ENCODE measurements at regions of chr10 and their contacts with region 1.

Region 1: DNA sequence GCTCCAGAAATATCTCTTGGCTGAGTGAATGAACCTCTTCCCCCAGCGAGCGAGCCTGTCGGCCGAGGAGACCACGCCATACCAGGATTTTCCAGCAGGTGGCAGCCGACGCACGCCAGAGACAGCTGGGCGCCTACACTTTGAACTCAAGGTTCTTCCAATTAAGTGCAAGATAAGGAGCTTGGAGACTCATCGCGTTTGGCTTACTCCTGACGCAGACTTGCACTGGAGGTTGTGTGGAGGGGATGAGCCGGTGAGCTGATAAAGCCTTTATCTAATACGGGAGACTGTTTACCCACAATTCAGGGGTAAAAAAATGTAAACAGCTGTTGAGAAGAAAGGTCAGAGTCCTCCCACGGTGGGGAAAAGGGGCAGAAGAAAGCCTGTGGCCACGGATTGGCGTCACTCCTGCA is 45.9 kb upstream of the EMX2 start:
- DNase-seq: peak; percentile 76
- CTCF ChIP-seq: peak; percentile 98

Region 2: GRCh38 chr10:117241541-117242462 is 254.8 kb before region 1 on chr10:
- CTCF ChIA-PET with region 1: no interaction called
- POLR2A ChIA-PET with region 1: no interaction called
- DNase-seq: no peak
- CTCF ChIP-seq: no peak

Region 3: DNA sequence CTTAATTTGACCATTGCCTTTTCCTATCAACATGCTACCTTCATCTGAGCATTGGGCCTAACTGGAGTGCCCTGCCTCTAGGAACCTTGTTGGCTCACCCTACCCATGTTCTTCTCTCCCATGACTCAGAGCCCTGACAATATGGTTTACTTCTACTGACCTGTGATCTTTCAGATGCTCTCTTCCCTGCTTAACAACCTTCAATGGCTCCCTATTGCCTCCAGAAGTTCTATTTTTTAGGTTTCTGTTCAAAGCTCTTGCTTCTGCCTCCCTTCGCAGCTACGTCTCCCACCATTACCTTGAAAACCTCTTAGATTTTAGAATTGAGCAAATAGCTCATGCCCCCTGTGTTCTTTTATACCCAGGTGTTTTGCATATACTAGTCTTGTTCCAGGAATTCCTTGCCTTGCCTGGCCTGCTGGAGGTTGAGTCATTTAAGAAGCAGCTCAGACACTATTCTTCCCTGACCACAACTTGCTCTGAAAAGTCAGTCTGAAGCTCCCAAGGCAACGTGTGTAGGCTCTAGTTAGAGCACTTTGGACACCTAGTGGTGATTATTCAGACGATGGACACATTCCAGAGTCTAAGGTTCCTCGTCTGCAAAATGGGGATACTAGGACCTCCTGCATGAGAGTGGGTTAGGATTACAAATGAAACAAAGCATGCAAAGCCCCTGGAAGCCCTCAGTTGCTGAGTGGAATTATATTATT is 18.5 kb before region 1 on chr10:
- CTCF ChIA-PET with region 1: interaction called, 28 read pairs
- POLR2A ChIA-PET with region 1: no interaction called
- DNase-seq: no peak
- CTCF ChIP-seq: peak; percentile 10

Region 4: GRCh38 chr10:117483056-117483604 is 13.5 kb before region 1 on chr10:
- CTCF ChIA-PET with region 1: interaction called, 28 read pairs
- POLR2A ChIA-PET with region 1: no interaction called
- DNase-seq: no peak
- CTCF ChIP-seq: no peak

Region 5: GRCh38 chr10:118106426-118106825 is 609.8 kb after region 1 on chr10:
- CTCF ChIA-PET with region 1: interaction called, 22 read pairs
- POLR2A ChIA-PET with region 1: no interaction called
- DNase-seq: peak; percentile 9
- CTCF ChIP-seq: peak; percentile 49

Region 6: GRCh38 chr10:118241229-118242137 is 744.9 kb after region 1 on chr10:
- CTCF ChIA-PET with region 1: interaction called, 88 read pairs
- POLR2A ChIA-PET with region 1: no interaction called
- DNase-seq: peak; percentile 50
- CTCF ChIP-seq: peak; percentile 94

Region 7: DNA sequence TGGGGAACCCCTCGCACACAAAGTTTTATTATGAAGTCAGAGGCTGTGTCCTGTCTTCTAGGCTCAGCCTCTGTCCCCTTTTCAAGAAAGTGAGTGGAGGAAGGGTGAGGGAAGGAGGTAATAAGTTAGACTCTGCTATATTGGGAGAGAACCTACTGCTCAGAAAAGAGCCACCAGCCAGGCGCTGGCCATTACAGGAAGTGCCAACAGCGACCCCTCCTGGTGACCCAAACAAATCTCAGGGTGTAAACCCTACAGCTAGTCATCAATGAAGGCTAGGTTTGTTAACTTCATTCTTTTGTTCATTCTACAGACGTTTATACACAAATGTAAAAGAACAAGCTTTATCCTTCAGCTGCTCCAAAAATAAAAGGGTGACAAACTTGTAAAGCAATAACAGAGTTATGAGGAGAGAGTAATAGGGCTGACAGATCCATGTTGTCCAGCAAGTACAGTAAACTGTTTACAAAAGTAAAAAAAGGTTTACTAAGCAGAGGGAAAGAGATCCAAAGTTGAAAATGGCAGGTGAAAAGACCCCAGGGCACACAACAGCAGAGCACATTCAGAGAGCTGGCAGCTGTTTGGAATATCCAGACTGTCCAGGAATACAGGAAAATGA is 762.8 kb after region 1 on chr10:
- CTCF ChIA-PET with region 1: interaction called, 58 read pairs
- POLR2A ChIA-PET with region 1: no interaction called
- DNase-seq: peak; percentile 32
- CTCF ChIP-seq: peak; percentile 43

Region 8: DNA sequence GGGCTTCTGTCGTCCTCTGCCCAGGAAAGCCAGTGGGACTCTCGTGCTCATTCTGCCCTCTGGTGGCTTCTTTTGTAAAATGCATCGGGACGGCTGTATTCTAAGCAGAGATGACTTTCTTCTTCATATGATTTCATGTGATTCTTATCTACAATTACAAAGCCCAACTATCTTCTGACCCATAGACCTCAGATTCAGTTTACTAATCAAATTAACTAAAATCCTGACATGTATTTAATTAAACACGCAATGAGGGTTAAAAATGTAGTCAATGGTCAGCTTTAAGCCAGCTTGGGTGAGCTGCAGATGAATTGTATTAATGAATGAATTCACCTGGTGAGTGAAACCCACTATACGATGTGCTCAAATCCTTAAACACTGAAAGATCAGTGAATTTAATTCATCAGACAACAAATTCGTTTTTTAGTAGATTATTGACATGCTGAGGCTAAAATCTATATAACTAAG is 963.1 kb after region 1 on chr10:
- CTCF ChIA-PET with region 1: interaction called, 43 read pairs
- POLR2A ChIA-PET with region 1: no interaction called
- DNase-seq: peak; percentile 53
- CTCF ChIP-seq: peak; percentile 70